Sigmoid colon (tissue), 7 donors: ENCODE measurements at regions of chr11 and their contacts with region 1.

Region 1: DNA sequence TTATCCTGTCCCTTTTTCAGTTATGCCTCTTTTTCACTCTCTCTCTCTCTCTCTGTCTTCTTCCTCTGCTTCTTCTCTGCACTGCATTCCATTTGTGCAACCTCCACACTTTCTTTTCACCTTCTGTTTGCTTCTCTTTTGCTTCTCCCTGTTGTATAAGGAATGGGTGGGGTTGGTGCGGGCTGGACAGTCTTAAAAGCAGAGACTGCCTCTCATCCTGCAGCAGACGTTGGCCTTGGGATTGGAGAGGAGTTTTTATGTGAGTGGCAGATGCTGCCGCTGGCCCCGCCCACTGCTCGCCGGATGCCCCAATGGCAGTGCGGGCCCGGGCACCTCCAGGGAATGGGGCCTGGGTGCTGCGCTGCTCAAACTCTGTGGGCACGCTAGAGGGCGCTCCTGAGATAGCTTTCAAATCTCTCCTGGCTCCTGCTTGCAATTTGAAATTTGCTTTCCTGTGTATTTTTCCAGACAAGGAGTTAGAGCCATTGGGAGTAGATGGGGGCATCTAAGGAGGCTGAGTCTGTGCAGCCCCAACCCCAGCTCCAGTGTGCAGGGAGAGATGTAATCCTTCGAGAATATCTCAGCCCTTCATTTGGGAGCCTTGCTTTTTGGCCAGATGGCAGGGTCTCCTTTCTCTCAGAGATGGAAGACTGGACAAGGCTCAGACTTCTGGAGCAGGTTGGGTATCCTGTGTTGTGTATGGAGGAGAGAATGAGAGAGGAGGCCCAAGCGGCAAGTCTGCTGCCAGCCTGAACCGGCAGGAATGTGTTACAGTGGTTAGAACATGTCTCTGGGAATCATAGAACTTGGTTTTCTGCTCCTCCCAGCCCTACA is 81.2 kb downstream of the GRAMD1B start:
- DNase-seq: peak; percentile 80
- H3K4me3 ChIP-seq: no peak overlapping the region
- H3K27ac ChIP-seq: no peak overlapping the region
- H3K4me1 ChIP-seq: no peaks in the 10 kb centered on the region
- H3K27me3 ChIP-seq: no peaks in the 10 kb centered on the region
- CTCF ChIP-seq: peak in 3 of 4 experiments; percentile 56 to 87 (median 64)
- EP300 ChIP-seq: no peak
- POLR2A ChIP-seq: no peak

Region 2: GRCh38 chr11:123585206-123585605 is 74.0 kb after region 1 on chr11:
- intact Hi-C with region 1: no loop called
- DNase-seq: no peak
- H3K4me3 ChIP-seq: no peak overlapping the region
- H3K27ac ChIP-seq: no peak overlapping the region
- H3K4me1 ChIP-seq: peaks cover 0 to 5% (median 2%) of the 10 kb centered on the region in 4 donors
- H3K27me3 ChIP-seq: peaks cover 0 to 8% (median 0%) of the 10 kb centered on the region in 3 donors
- CTCF ChIP-seq: no peak
- EP300 ChIP-seq: no peak
- POLR2A ChIP-seq: no peak

Region 3: DNA sequence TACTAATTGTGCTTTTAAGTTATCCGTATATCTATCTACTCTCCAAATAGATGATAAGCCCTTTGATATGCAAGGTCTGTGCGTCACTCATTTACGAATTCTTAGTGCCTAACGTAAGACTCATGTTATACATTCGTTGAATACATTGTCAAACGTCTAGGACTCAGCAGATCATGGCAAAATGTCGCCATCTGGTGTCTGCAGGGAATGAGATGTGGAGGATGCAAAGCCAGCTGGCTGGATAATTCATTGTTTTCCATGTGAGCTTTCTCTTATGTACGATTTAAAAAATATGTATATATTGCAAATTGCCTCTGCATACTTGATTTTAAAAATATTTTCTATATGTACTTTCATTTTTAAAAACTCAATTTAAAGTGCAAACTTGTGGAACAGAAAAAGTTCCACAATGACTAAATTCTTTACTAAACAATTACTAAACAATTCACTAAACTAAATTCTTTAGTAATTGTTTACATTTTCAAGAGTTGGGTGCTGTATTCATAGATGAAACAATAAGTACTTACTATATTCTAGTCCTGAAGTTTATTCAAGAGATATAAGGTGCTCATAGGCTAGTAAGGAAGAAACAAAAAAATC is 196.5 kb after region 1 on chr11:
- intact Hi-C with region 1: loop called (anchors 10 kb)
- DNase-seq: no peak
- H3K4me3 ChIP-seq: no peak overlapping the region
- H3K27ac ChIP-seq: no peak overlapping the region
- H3K4me1 ChIP-seq: no peaks in the 10 kb centered on the region
- H3K27me3 ChIP-seq: peaks cover 0 to 2% (median 0%) of the 10 kb centered on the region in 3 donors
- CTCF ChIP-seq: peak; percentile 23 to 54 (median 36)
- EP300 ChIP-seq: no peak
- POLR2A ChIP-seq: no peak